HCT116 (cell line): ENCODE measurements at regions of chr10 and their contacts with region 1.

Region 1: DNA sequence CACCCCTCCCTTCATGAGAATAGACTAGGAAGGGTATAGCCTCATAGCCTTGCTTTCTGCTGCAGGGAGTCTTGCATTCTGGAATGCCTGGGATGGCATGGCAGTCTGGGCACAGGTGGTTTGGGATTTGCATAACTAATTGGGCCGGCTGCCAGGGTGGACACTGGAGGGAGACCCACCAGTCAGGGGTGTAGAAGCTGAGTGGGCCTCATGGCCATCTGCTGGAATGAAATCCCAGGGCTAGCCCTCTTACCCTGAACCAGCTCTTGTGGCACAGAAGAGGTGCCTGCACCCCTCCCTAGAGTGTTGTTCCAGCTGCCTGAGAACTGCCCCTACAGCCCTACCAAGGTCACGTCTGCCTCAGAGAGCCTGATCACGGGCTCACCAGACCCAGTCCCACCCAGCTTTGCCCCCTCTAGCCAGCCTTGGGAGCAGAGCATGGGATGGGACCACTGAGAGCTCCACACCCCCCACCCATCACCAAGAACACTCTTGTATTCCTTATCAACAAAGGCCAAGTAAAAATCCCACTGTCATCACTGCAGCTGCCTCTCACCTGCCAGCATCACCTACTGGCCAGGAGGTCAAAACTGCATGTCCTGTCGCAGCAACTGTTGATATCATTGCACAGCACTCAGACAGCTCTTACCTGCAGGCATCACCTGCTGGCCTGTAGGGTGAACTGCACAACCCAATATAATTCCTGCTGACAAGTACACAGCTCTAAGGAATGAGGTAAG is 148.9 kb downstream of the ZEB1 start:
- DNase-seq: peak; percentile 57
- ATAC-seq: peak; percentile 99
- H3K4me3 ChIP-seq: no peak overlapping the region
- H3K27ac ChIP-seq: no peak overlapping the region
- H3K4me1 ChIP-seq: no peaks in the 10 kb centered on the region
- H3K27me3 ChIP-seq: no peaks in the 10 kb centered on the region
- CTCF ChIP-seq: peak; percentile 84 to 94 (median 86)
- POLR2A ChIP-seq: no peak
- RAD21 ChIP-seq: peak; percentile 88

Region 2: GRCh38 chr10:30722956-30723620 is 744.9 kb before region 1 on chr10:
- CTCF ChIA-PET with region 1: no interaction called
- POLR2A ChIA-PET with region 1: no interaction called
- RAD21 ChIA-PET with region 1: no interaction called
- intact Hi-C with region 1: loop called (anchors 10 kb)
- DNase-seq: no peak
- ATAC-seq: no peak
- H3K4me3 ChIP-seq: no peak overlapping the region
- H3K27ac ChIP-seq: no peak overlapping the region
- H3K4me1 ChIP-seq: no peaks in the 10 kb centered on the region
- H3K27me3 ChIP-seq: no peaks in the 10 kb centered on the region
- CTCF ChIP-seq: no peak
- POLR2A ChIP-seq: no peak
- RAD21 ChIP-seq: no peak

Region 3: GRCh38 chr10:30751678-30752331 is 716.2 kb before region 1 on chr10:
- CTCF ChIA-PET with region 1: interaction called, 9 read pairs
- POLR2A ChIA-PET with region 1: no interaction called
- RAD21 ChIA-PET with region 1: no interaction called
- intact Hi-C with region 1: loop called (anchors 5 kb)
- DNase-seq: peak; percentile 10
- ATAC-seq: peak; percentile 99
- H3K4me3 ChIP-seq: no peak overlapping the region
- H3K27ac ChIP-seq: no peak overlapping the region
- H3K4me1 ChIP-seq: no peaks in the 10 kb centered on the region
- H3K27me3 ChIP-seq: no peaks in the 10 kb centered on the region
- CTCF ChIP-seq: peak; percentile 63 to 87 (median 86); a peak in 5 of 6 replicates
- POLR2A ChIP-seq: no peak
- RAD21 ChIP-seq: peak; percentile 91

Region 4: GRCh38 chr10:31456468-31456867 is 11.5 kb before region 1 on chr10:
- CTCF ChIA-PET with region 1: interaction called, 13 read pairs
- POLR2A ChIA-PET with region 1: no interaction called
- RAD21 ChIA-PET with region 1: no interaction called
- intact Hi-C with region 1: no loop called
- DNase-seq: no peak
- ATAC-seq: no peak
- H3K4me3 ChIP-seq: no peak overlapping the region
- H3K27ac ChIP-seq: no peak overlapping the region
- H3K4me1 ChIP-seq: no peaks in the 10 kb centered on the region
- H3K27me3 ChIP-seq: no peaks in the 10 kb centered on the region
- CTCF ChIP-seq: no peak
- POLR2A ChIP-seq: no peak
- RAD21 ChIP-seq: no peak